Caco-2 (cell line): ENCODE measurements at regions of chr5 and their contacts with region 1.

Region 1: GRCh38 chr5:17113163-17113958 is 104.1 kb upstream of the BASP1 start:
- DNase-seq: no peak
- H3K4me3 ChIP-seq: no peak overlapping the region
- H3K4me3 Mint-ChIP-seq: no peak overlapping the region
- H3K27ac Mint-ChIP-seq: peak overlapping the region; percentile 64
- H3K4me1 ChIP-seq: peaks cover 39% of the 10 kb centered on the region
- H3K4me1 Mint-ChIP-seq: peaks cover 26% of the 10 kb centered on the region
- H3K27me3 ChIP-seq: no peaks in the 10 kb centered on the region
- H3K27me3 Mint-ChIP-seq: no peaks in the 10 kb centered on the region
- CTCF ChIP-seq: no peak

Region 2: DNA sequence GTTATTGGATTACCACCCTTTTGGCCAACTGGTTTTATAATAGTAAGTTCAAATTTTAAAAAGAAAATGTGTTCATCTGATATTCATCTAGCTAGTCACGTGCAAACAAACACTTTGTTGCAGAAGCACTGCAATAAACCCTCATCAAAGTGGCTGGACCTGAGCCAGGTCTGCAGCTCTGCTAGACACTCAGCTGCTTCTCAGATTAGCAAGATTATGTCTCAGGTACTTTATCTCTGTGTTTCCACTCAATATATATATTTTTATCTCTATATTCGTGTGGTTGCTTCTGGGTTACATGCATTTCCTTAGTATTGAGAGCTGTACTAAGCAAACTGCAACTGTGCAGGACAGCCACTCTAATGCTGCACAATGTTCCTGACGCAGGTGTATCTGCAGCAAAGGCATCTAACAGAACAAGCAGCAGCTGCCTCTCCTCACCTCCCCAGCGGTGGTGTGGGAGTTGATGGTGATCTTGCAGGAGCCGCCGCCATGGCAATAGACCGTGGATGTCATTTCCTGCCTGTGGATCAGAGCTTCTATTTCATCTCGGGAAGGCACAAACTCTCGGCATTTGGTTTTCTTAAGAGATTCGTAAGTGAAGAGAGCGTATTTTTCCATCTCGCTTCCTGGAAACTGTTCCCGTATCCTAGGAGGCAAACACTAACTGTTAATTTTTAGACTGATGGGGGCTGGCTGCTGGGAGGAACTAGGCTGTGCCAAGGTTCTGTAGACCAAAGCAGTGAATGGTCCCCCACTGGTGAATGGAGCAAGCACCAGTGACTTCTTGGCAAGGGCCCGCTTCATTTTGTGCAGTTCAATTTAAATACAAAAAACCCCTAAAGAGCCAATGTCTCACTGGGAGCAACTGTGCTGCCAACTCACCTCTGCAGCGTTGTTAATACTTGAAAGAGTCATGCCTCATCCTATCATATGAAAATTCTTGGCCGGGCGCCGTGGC is 439.8 kb before region 1 on chr5:
- CTCF ChIA-PET with region 1: no interaction called
- POLR2A ChIA-PET with region 1: interaction called, 22 read pairs
- intact Hi-C with region 1: no loop called
- DNase-seq: no peak
- H3K4me3 ChIP-seq: no peak overlapping the region
- H3K4me3 Mint-ChIP-seq: no peak overlapping the region
- H3K27ac Mint-ChIP-seq: no peak overlapping the region
- H3K4me1 ChIP-seq: no peaks in the 10 kb centered on the region
- H3K4me1 Mint-ChIP-seq: no peaks in the 10 kb centered on the region
- H3K27me3 ChIP-seq: no peaks in the 10 kb centered on the region
- H3K27me3 Mint-ChIP-seq: no peaks in the 10 kb centered on the region
- CTCF ChIP-seq: no peak

Region 3: DNA sequence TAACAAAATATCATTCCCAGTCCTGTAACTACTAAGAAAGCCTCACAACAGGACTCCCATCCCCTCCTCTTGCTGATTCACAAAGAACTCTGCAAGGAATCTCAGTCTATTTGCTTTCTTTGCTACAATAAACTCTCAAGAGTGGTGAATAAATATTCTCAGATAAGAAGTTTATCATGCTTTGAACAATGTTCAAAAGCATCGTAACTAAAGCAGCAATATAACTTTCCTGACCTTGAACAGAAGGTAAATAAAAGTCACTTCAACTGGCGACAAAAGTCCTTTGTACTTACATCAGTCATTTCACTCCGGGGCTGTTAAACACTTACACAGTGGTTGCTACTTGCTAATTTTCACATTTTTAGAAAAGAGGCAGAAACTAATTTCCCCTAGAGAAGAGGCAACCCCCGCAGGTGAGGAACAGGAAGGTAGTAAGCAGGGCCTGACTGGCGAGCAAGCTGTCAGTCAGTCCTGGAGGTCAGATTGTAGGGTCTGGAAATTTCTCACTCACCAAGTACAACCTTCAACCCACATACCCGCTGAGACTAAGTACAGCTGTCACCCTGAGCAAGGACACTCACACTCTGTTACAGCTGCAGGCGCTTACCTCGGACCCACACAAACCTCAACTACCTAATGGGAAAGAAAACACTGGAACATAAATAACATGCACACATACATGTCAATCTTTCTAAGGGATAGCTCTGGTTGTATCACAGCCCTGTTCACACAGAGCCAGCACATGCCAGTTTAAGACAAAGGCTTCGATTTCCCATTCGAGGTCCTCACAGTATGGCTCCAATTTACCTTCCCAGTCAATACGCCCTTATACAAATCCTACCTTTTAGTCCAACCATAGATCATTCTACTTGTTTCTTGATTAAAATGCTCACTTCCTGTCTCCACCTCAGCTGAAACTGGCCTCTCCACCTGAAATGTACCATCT is 391.9 kb before region 1 on chr5:
- CTCF ChIA-PET with region 1: no interaction called
- POLR2A ChIA-PET with region 1: no interaction called
- intact Hi-C with region 1: loop called (anchors 1 kb)
- DNase-seq: peak; percentile 69 to 73
- H3K4me3 ChIP-seq: no peak overlapping the region
- H3K4me3 Mint-ChIP-seq: peak overlapping the region; percentile 37
- H3K27ac Mint-ChIP-seq: peak overlapping the region; percentile 92
- H3K4me1 ChIP-seq: peaks cover 36% of the 10 kb centered on the region
- H3K4me1 Mint-ChIP-seq: peaks cover 20% of the 10 kb centered on the region
- H3K27me3 ChIP-seq: no peaks in the 10 kb centered on the region; the same call in 1 of the 2 replicates
- H3K27me3 Mint-ChIP-seq: no peaks in the 10 kb centered on the region
- CTCF ChIP-seq: no peak

Region 4: DNA sequence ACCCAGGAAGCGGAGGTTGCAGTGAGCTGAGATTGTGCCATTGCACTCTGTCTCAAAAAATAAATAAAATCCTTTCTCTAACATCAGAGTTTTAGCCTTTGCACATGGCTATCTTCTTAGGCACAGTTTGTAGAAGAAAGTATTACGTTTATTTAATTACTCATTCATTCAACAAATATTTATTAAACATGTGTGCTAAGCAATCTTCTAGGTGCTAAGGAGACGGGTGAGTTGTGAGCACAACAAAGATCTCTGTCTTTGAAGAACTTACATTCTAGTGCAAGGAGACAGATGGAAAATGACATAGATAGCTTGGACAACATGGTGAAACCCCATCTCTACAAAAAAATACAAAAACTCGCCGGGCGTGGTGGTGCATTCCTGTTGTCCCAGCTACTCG is 54.9 kb before region 1 on chr5:
- CTCF ChIA-PET with region 1: no interaction called
- POLR2A ChIA-PET with region 1: no interaction called
- intact Hi-C with region 1: no loop called
- DNase-seq: no peak
- H3K4me3 ChIP-seq: no peak overlapping the region
- H3K4me3 Mint-ChIP-seq: no peak overlapping the region
- H3K27ac Mint-ChIP-seq: no peak overlapping the region
- H3K4me1 ChIP-seq: peaks cover 25% of the 10 kb centered on the region
- H3K4me1 Mint-ChIP-seq: peaks cover 27% of the 10 kb centered on the region
- H3K27me3 ChIP-seq: no peaks in the 10 kb centered on the region
- H3K27me3 Mint-ChIP-seq: no peaks in the 10 kb centered on the region
- CTCF ChIP-seq: no peak

Region 5: DNA sequence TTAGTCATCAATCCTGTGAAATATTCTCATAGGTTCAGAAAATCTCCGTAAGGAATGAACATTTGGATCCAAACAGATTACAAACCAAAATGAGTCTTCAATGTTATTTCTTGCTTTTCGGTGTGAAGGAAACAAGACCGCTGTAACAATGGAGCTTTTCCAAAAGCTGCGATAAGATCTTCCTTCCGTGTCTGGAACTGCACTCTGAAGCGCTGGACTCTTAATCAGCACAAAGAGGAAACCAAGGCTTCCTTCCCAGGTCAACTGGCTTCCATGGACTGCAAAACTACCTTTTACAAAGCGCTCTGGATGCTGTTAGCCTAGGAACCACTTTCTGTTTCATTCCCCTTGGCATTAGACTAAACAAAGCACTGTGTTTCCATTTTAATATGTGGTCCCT is 33.8 kb before region 1 on chr5:
- CTCF ChIA-PET with region 1: no interaction called
- POLR2A ChIA-PET with region 1: no interaction called
- intact Hi-C with region 1: loop called (anchors 1 kb)
- DNase-seq: no peak
- H3K4me3 ChIP-seq: no peak overlapping the region
- H3K4me3 Mint-ChIP-seq: no peak overlapping the region
- H3K27ac Mint-ChIP-seq: no peak overlapping the region
- H3K4me1 ChIP-seq: peaks cover 32% of the 10 kb centered on the region
- H3K4me1 Mint-ChIP-seq: peaks cover 34% of the 10 kb centered on the region
- H3K27me3 ChIP-seq: no peaks in the 10 kb centered on the region
- H3K27me3 Mint-ChIP-seq: no peaks in the 10 kb centered on the region
- CTCF ChIP-seq: no peak

Region 6: GRCh38 chr5:17132444-17133083 is 19.2 kb after region 1 on chr5:
- CTCF ChIA-PET with region 1: interaction called, 18 read pairs
- POLR2A ChIA-PET with region 1: no interaction called
- intact Hi-C with region 1: loop called (anchors 1 kb)
- DNase-seq: peak in 1 of 2 experiments; percentile 45
- H3K4me3 ChIP-seq: no peak overlapping the region
- H3K4me3 Mint-ChIP-seq: no peak overlapping the region
- H3K27ac Mint-ChIP-seq: no peak overlapping the region
- H3K4me1 ChIP-seq: no peaks in the 10 kb centered on the region
- H3K4me1 Mint-ChIP-seq: peaks cover 9% of the 10 kb centered on the region
- H3K27me3 ChIP-seq: no peaks in the 10 kb centered on the region
- H3K27me3 Mint-ChIP-seq: no peaks in the 10 kb centered on the region
- CTCF ChIP-seq: peak; percentile 49 to 76

Region 7: DNA sequence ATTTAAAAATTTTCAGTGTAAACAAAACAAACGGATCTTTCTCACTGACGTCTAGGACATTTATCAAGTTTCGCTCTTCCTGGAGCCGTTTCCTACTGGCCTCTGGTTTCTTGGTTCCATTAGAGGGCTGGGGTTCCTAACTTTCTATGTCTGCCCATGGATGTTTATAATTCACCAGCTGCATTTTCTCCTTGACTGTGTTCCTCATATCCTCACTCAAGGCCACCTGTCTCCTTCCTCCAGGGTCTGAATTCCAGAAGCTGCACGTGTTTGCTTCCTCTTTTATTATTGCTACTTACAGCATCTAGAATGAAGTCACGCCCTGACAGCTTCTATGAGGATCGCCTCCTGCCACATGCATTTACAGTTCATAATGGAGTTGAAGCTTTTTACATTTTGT is 30.0 kb after region 1 on chr5:
- CTCF ChIA-PET with region 1: no interaction called
- POLR2A ChIA-PET with region 1: no interaction called
- intact Hi-C with region 1: loop called (anchors 1 kb)
- DNase-seq: no peak
- H3K4me3 ChIP-seq: no peak overlapping the region
- H3K4me3 Mint-ChIP-seq: no peak overlapping the region
- H3K27ac Mint-ChIP-seq: peak overlapping the region; percentile 12
- H3K4me1 ChIP-seq: 0 out of 2 replicates have a peak, but pooled peaks cover 8% of the 10 kb centered on the region
- H3K4me1 Mint-ChIP-seq: peaks cover 16% of the 10 kb centered on the region
- H3K27me3 ChIP-seq: no peaks in the 10 kb centered on the region
- H3K27me3 Mint-ChIP-seq: no peaks in the 10 kb centered on the region
- CTCF ChIP-seq: no peak

Region 8: GRCh38 chr5:17169507-17169906 is 56.1 kb after region 1 on chr5:
- CTCF ChIA-PET with region 1: no interaction called
- POLR2A ChIA-PET with region 1: no interaction called
- intact Hi-C with region 1: loop called (anchors 1 kb)
- DNase-seq: peak; percentile 48 to 70
- H3K4me3 ChIP-seq: no peak overlapping the region
- H3K4me3 Mint-ChIP-seq: no peak overlapping the region
- H3K27ac Mint-ChIP-seq: peak overlapping the region; percentile 24
- H3K4me1 ChIP-seq: peaks cover 26% of the 10 kb centered on the region
- H3K4me1 Mint-ChIP-seq: peaks cover 31% of the 10 kb centered on the region
- H3K27me3 ChIP-seq: no peaks in the 10 kb centered on the region
- H3K27me3 Mint-ChIP-seq: no peaks in the 10 kb centered on the region
- CTCF ChIP-seq: no peak

Region 9: GRCh38 chr5:17918373-17919104 is 805.2 kb after region 1 on chr5:
- CTCF ChIA-PET with region 1: no interaction called
- POLR2A ChIA-PET with region 1: no interaction called
- intact Hi-C with region 1: no loop called
- DNase-seq: no peak
- H3K4me3 ChIP-seq: no peak overlapping the region
- H3K4me3 Mint-ChIP-seq: no peak overlapping the region
- H3K27ac Mint-ChIP-seq: no peak overlapping the region
- H3K4me1 ChIP-seq: no peaks in the 10 kb centered on the region
- H3K4me1 Mint-ChIP-seq: no peaks in the 10 kb centered on the region
- H3K27me3 ChIP-seq: no peaks in the 10 kb centered on the region
- H3K27me3 Mint-ChIP-seq: peaks cover 3% of the 10 kb centered on the region
- CTCF ChIP-seq: no peak